Ovary (tissue), 10 donors: ENCODE measurements at regions of chr4 and their contacts with region 1.

Region 1: DNA sequence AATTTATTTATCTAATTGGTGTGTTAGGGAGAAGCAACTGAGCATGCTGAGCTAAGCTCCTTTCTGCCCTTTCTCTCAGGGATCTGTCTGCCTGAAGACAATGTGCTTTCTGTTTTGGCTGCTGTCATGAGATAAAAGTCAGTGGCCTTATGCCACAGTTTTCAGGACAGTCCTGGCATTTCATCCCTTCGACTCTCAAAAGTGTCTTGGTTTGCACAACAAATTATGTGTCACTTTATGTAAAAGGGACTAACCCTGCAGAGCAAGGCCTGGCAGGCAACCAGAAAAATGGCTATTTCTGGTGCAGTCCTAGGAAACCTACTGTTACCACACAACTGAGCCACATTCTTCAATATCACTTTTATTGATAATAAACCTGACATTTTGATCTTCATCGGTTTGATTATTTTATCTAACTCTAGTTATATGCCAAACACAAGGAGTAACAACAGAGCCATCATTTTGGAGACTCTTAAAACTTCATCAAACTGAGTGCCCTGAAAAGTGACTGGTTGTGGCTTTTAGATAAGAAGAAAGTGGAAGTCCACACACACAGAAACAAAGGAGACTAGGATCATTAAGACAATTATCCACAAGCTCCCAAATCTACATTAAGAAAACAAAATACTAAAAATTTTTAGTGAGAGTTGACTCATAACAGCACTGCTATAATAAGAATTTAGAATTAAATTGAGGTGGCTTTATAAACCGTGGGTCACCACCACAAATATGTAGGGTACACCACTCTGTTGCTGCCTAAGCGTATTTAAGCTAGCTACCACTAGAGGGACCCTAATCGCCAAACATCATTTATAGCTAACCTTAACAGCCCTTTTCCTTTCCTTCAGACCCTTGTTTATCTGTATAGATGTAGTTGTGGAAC is 95.9 kb upstream of the PTPN13 start:
- DNase-seq: no peak
- H3K4me3 ChIP-seq: no peak overlapping the region
- H3K27ac ChIP-seq: no peak overlapping the region
- H3K4me1 ChIP-seq: no peaks in the 10 kb centered on the region
- H3K27me3 ChIP-seq: no peaks in the 10 kb centered on the region
- CTCF ChIP-seq: peak; percentile 57 to 70 (median 59)
- EP300 ChIP-seq: no peak
- POLR2A ChIP-seq: no peak

Region 2: DNA sequence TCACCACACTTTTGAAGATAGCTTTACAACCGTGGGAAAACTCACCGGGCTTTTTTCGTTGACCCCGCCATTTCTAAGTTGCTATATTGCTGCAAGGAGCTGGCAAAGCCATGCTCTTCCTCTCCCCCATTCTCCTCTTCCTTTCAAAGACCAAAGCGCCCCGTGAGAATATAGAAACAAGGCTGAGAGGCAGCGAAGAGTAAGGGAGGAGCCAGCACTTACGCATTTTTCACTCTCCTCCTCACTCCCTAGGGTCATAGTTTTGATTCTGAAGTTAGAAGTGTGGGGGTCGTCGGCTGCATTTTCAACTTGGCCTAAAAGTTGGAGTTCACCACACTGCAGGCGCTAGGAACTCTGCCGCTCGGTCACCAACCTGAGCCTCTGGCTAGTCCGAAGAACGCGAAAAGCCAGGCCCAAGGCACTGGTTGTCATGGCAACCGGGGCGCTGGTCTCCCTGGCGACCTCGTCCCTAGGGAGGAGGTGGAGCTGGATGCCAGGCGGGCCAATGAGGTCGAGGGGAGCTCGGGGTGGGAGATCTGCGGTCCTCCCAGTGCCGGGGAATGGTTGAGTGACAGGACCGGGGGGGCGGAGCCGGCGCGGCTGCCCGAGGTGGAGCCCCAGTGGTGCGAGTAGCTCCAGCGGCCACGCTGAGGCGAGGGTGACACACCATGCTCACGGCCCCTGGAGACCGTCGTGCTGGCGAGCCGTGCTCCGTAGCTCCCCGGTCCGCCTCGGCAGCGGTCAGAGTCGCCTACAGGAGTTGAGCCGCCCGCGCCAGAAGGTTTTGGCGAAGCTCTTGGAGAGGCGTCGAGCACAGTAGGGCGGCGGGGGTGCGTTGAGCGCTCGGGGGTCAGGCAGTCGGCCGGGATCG is 95.7 kb after region 1 on chr4 and contains the start of gene PTPN13:
- intact Hi-C with region 1: loop called in 1 of 4 experiments (anchors 5 kb)
- DNase-seq: peak; percentile 99 to 100 (median 99)
- H3K4me3 ChIP-seq: peak within 1 kb of the TSS; percentile 85
- H3K27ac ChIP-seq: peak within 1 kb of the TSS; percentile 87 to 91
- H3K4me1 ChIP-seq: peaks cover 6% of the 10 kb centered on the region
- H3K27me3 ChIP-seq: no peaks in the 10 kb centered on the region
- CTCF ChIP-seq: no peak
- EP300 ChIP-seq: peak; percentile 37
- POLR2A ChIP-seq: peak; percentile 82
- total RNA-seq, gene PTPN13: 38.5 to 73.4 (median 54.6) TPM

Region 3: GRCh38 chr4:86895692-86896488 is 397.7 kb after region 1 on chr4:
- intact Hi-C with region 1: loop called (anchors 2 to 10 kb)
- DNase-seq: no peak
- H3K4me3 ChIP-seq: no peak overlapping the region
- H3K27ac ChIP-seq: no peak overlapping the region
- H3K4me1 ChIP-seq: no peaks in the 10 kb centered on the region
- H3K27me3 ChIP-seq: no peaks in the 10 kb centered on the region
- CTCF ChIP-seq: peak; percentile 58 to 78 (median 71)
- EP300 ChIP-seq: no peak
- POLR2A ChIP-seq: no peak

Region 4: GRCh38 chr4:87363567-87363966 is 865.3 kb after region 1 on chr4:
- intact Hi-C with region 1: no loop called
- DNase-seq: no peak
- H3K4me3 ChIP-seq: no peak overlapping the region
- H3K27ac ChIP-seq: no peak overlapping the region
- H3K4me1 ChIP-seq: no peaks in the 10 kb centered on the region
- H3K27me3 ChIP-seq: no peaks in the 10 kb centered on the region
- CTCF ChIP-seq: no peak
- EP300 ChIP-seq: no peak
- POLR2A ChIP-seq: no peak

Region 5: GRCh38 chr4:88456757-88457306 is 1958.6 kb after region 1 on chr4 and contains the start of gene HERC5:
- intact Hi-C with region 1: loop called in 1 of 4 experiments (anchors 5 kb)
- DNase-seq: peak; percentile 93 to 97 (median 95)
- H3K4me3 ChIP-seq: peak within 1 kb of the TSS; percentile 92
- H3K27ac ChIP-seq: peak within 1 kb of the TSS; percentile 89 to 92
- H3K4me1 ChIP-seq: no peaks in the 10 kb centered on the region
- H3K27me3 ChIP-seq: no peaks in the 10 kb centered on the region
- CTCF ChIP-seq: peak; percentile 61 to 84 (median 83)
- EP300 ChIP-seq: peak; percentile 56
- POLR2A ChIP-seq: peak; percentile 85
- total RNA-seq, gene HERC5: 10.5 to 20.9 (median 18.6) TPM